Dendritic cell treated with granulocyte-macrophage colony-stimulating factor and Interleukin-4, amounts not matched to agents 40 ng/mL and 50 ng/mL, for 4 days (primary cell): ENCODE measurements at regions of chr4 and their contacts with region 1.

Region 1: DNA sequence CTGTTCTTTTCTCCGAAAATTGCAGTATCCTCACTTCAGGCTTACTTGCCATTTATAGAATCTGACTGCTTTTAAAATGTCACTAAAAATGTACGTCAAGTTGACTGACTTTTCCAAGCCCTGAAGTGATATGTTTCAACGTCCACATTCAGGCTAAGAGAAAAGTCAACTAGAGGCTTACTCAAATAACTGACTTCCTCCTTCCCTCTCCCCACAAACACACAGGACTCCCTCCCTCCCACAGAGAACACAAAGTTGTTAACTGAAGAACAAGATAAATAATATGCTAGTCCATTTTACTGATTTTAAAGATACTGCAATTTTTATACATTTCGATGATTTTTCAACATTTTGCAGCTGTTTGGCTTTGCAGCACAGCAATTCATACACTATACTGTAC is 13.8 kb upstream of the CDKL2 start:
- H3K4me3 Mint-ChIP-seq: no peak overlapping the region
- H3K27ac Mint-ChIP-seq: no peak overlapping the region
- H3K4me1 Mint-ChIP-seq: peaks cover 16% of the 10 kb centered on the region
- H3K27me3 Mint-ChIP-seq: no peaks in the 10 kb centered on the region

Region 2: DNA sequence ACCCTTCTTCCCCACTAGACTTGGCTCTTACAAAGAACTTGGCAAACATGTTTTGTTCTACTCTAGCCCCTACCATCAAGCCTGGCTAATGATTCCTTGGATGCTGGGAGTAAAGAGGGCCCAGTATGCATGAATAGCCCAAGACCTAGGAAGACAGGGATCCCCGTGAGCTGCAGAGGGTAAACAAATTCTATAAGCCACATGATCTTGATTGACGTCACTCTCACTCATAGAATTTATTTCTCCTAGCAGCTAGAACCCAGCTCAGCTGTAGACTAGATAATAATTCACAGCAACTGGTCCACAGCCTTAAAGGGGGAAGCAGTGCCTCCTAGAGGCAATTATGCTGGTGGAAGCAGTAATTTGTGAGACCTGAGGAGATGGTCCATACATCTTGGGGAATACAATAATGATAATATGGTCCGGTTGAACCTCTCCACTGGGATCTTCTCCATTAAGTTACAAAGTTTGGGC is 64.2 kb after region 1 on chr4:
- intact Hi-C with region 1: no loop called
- H3K4me3 Mint-ChIP-seq: no peak overlapping the region
- H3K27ac Mint-ChIP-seq: no peak overlapping the region
- H3K4me1 Mint-ChIP-seq: no peaks in the 10 kb centered on the region
- H3K27me3 Mint-ChIP-seq: no peaks in the 10 kb centered on the region

Region 3: DNA sequence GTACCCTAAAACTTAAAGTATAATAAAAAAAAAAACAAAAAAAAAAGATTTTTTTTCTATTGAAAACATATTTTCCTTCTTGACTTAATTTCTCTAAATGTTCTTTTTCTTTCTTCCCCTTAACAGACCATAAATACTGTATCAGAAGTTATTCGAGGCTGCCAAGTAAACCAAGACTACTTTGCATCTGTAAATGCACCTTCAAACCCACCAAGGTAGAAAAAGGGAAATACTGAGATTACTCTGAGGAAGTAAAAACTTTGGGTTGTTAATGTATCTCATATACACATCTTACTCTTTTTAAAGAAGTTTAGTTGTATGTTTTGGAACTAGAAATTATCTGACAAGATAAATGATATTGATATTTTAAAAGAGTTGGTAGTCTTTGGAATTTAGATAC is 145.9 kb after region 1 on chr4:
- intact Hi-C with region 1: loop called (anchors 10 kb)
- H3K4me3 Mint-ChIP-seq: no peak overlapping the region
- H3K27ac Mint-ChIP-seq: no peak overlapping the region
- H3K4me1 Mint-ChIP-seq: no peaks in the 10 kb centered on the region
- H3K27me3 Mint-ChIP-seq: no peaks in the 10 kb centered on the region